ENCODE measurements at regions of chr9 and their contacts with region 1.

Region 1: DNA sequence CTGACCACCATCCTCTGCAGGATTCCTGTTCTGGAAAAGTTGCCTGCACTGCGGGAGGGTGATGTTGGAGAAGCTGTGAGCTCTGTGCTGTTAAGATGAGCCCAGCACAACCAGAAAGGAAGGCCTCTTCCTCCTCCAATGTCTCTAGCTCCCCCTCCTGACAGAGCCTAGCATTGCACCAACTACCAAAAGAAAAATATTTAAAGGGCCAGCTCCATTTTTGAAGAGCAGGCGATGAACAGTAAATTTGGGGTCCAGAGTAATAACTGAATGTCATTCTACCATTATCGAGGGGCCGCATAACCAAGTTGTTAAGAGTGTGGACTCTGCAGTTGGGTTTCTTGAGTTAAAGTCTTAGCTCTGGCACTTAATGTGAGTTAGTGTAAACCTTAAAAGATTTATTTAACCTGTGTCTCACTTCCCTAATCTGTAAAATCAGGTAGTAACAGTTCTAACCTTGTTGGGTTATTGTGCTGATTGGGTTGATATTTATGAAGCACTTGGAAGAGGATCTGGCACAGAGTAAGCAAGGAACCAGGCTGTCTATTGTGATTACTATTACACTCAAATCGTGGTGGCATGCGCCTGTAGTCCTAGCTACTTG is 3.9 kb downstream of the TEX53 start:
- DNase-seq: peak; percentile 84
- H3K4me3 ChIP-seq: no peak overlapping the region
- H3K27ac ChIP-seq: peak overlapping the region; percentile 90
- H3K4me1 ChIP-seq: peaks cover 13% of the 10 kb centered on the region
- H3K27me3 ChIP-seq: no peaks in the 10 kb centered on the region

Region 2: GRCh38 chr9:114405294-114406034 is 248.2 kb before region 1 on chr9:
- in situ Hi-C with region 1: loop called (anchors 10 kb)
- DNase-seq: peak; percentile 87
- H3K4me3 ChIP-seq: no peak overlapping the region
- H3K27ac ChIP-seq: no peak overlapping the region
- H3K4me1 ChIP-seq: no peaks in the 10 kb centered on the region
- H3K27me3 ChIP-seq: no peaks in the 10 kb centered on the region

Region 3: DNA sequence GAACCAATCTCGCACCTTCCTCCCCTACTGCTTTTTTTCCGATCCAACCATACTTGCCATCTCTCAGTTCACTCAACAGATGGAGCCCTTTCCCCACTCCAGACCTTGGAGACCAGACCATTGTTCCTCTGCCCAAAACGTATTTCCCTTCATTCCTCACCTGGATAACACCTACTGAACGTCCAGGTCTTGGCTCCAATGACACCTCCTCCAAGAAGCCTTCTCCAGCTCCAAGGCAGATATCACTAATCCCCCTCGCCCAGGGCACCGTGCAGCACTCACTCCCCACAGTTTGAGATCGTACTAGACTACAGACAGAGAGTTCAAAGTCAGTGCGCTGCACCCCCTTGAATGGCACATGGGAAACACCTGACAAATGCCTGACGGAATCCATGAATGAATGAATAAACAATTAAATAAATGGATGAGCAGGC is 218.8 kb before region 1 on chr9:
- in situ Hi-C with region 1: loop called (anchors 10 kb)
- DNase-seq: peak; percentile 53
- H3K4me3 ChIP-seq: no peak overlapping the region
- H3K27ac ChIP-seq: no peak overlapping the region
- H3K4me1 ChIP-seq: no peaks in the 10 kb centered on the region
- H3K27me3 ChIP-seq: no peaks in the 10 kb centered on the region

Region 4: GRCh38 chr9:114499528-114499927 is 154.1 kb before region 1 on chr9:
- in situ Hi-C with region 1: no loop called
- DNase-seq: no peak
- H3K4me3 ChIP-seq: no peak overlapping the region
- H3K27ac ChIP-seq: no peak overlapping the region
- H3K4me1 ChIP-seq: no peaks in the 10 kb centered on the region
- H3K27me3 ChIP-seq: no peaks in the 10 kb centered on the region

Region 5: GRCh38 chr9:114560956-114561355 is 92.7 kb before region 1 on chr9:
- in situ Hi-C with region 1: no loop called
- DNase-seq: no peak
- H3K4me3 ChIP-seq: no peak overlapping the region
- H3K27ac ChIP-seq: no peak overlapping the region
- H3K4me1 ChIP-seq: 0 out of 2 replicates have a peak, but pooled peaks cover under 1% of the 10 kb centered on the region
- H3K27me3 ChIP-seq: peaks cover 5% of the 10 kb centered on the region; the same call in 1 of the 2 replicates

Region 6: DNA sequence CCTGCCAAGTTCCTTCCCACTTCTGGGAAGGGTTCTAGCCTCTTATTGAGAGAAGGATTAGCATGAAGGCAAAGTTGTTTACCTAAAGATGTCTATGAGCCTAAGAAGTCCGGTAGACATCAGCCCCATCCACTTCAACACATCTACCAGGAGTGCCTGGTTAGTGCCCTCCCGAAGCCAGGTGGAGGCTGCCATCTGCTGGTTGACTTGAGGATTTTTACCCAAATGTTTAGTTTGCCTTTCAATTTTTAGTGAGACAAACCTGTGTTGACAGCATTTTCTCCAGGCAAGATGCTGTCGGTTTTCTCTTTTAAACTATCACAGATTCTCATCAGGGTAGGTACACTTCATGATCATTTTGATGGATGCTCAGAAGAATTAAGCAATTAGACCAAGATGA is 360.3 kb after region 1 on chr9:
- in situ Hi-C with region 1: no loop called
- DNase-seq: peak; percentile 83
- H3K4me3 ChIP-seq: no peak overlapping the region
- H3K27ac ChIP-seq: no peak overlapping the region
- H3K4me1 ChIP-seq: peaks cover 9% of the 10 kb centered on the region
- H3K27me3 ChIP-seq: no peaks in the 10 kb centered on the region

Region 7: DNA sequence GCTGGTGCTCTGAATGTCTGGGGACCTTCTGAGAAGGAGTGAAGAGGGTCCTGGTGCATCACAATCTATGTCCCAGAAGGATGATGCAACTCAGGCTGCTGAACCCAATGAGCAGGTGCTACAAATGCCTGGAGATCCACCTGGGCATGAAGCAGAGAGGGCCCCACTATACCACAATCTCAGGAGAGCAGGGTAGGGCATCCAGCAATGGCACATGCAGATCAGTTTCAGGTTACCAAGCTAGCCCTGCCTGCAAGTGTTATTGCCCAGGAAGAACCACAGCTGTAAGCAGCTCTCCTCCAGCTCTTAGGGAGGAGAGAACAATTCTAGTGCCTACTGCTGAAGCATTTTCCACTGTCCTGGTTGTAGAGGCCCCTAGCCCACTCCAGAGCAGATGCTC is 853.5 kb after region 1 on chr9:
- in situ Hi-C with region 1: no loop called
- DNase-seq: no peak
- H3K4me3 ChIP-seq: no peak overlapping the region
- H3K27ac ChIP-seq: no peak overlapping the region
- H3K4me1 ChIP-seq: no peaks in the 10 kb centered on the region
- H3K27me3 ChIP-seq: no peaks in the 10 kb centered on the region

Measured in GM23248 (cell line).